SK-MEL-5 (cell line): ENCODE measurements at regions of chr11 and their contacts with region 1.

Region 1: DNA sequence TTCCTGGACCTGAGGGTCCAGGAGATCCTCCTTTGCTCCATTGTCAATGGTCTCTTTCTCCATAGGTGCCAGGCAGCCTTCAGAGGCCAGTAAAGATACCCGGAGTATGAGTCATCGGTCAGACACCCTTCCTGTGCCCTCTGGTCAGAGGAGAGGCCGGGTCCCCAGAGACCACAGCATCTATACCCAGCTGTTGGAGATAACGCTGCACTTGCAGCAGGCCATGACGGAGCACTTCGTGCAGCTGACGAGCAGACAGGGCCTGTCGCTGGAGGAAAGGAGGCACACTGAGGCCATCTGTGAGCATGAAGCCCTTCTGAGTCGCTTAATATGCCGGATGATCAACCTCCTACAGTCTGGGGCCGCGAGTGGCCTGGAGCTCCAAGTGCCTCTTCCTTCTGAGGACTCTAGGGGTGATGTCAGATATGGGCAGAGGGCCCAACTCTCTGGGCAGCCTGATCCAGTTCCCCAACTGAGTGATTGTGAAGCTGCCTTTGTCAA is at the start of gene ACCSL:
- DNase-seq: peak; percentile 44
- total RNA-seq, gene ACCSL: 1.5 TPM in 2 replicates

Region 2: DNA sequence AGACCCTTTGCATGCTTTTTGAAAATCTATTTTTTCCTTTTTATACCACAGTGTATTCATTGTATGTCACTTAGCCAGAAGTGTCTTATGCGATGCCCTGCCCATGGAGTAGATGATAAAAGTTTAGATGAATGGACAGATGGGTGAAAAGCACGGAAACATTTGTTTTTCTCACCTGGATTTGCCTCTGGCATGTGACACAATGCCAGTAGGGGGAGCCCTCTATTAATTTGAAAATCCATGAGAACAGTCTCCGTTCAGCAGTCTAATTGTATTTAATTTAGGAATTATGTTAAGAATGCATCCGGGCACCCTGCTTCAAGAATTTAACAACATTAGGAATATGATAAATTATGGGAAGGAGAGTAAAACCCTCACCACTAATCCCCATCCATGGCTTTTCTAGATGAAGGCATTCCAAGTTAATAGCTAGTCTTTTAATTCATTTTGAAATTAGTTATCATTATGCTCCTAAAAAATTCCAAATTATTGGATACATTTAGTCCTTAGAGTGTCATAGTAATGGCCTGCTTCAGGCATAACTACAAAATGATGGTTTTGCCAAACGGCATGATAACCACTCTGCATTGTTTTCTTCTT is 222.7 kb before region 1 on chr11:
- in situ Hi-C with region 1: no loop called
- DNase-seq: peak; percentile 58

Region 3: GRCh38 chr11:43905813-43906241 is 142.2 kb before region 1 on chr11:
- in situ Hi-C with region 1: loop called (anchors 10 kb)
- DNase-seq: no peak

Region 4: DNA sequence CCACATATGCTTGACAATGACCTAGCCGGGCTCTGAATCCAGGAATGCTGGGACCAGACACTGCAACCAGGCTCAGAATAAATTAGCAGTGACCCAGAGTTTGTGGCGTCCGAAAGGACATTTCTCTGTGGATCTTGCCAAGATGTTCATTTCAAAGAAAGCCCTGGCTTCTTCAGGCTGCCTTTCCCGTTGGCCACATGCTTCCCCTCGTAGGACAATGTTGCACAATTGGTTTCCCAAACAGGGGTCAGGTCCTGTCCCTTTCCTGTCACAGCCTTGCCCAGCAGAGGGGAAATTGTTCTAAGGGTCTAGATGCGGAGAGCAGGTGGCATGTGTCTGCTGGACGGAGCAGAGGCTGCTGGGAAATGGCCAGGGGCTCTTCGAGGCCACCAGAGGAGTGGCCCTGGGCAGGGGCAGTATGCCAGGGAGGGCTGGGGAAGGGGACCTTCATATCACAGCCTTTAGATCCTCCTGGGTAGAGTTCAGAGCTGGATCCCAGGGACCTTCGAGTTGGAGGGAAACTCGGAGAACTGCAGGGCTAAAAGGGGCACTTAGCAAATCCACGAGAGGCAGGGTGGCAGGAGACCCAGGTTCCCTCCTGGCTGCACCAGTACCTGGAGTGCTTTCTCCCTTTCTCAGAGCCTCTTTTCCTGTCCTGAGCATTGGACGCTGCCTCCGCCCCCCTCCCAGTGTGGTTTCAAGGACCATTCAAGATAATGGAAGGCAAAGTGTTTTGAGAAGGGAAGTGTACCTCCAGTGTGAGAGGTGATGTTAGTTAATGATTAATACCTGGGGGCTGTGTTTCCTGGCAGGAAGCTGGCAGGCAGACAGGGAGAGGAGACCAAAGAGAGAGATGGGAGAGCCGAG is 63.2 kb before region 1 on chr11:
- in situ Hi-C with region 1: no loop called
- DNase-seq: no peak